Ovary (tissue), 10 donors: ENCODE measurements at regions of chr5 and their contacts with region 1.

Region 1: GRCh38 chr5:59039296-59040023 is 456.6 kb downstream of the RAB3C start:
- DNase-seq: peak; percentile 22 to 66 (median 55)
- H3K4me3 ChIP-seq: peak overlapping the region; percentile 64
- H3K27ac ChIP-seq: no peak overlapping the region
- H3K4me1 ChIP-seq: peaks cover 2% of the 10 kb centered on the region
- H3K27me3 ChIP-seq: no peaks in the 10 kb centered on the region
- CTCF ChIP-seq: no peak
- EP300 ChIP-seq: no peak
- POLR2A ChIP-seq: no peak

Region 2: DNA sequence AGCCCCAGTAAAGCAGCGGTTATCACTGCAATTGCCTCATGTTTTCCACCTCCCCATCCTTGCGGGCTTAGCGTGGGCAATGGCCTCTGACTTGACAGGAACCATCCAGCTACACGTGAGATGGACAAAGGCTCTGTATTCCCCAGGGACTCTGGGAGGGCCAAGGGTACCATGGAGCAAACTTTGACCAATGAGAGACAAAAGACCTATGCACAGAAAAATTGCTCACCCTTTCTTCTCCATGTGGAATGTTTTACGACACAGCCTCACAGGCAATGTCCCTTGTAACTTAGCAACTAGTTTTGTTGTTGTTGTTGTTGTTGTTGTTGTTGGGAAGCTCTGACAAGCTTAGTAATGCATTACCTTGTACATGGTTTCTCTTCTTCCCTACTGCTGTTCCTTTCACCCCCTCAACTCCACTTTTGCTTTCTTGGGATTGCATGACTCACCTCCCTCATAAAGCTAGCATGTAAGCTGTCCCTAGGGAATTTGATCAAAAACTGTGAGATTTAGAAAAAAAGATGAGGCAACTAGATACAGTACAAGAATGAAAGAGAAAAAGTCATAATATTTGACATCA is 94.3 kb after region 1 on chr5:
- intact Hi-C with region 1: loop called in 1 of 4 experiments (anchors 10 kb)
- DNase-seq: no peak
- H3K4me3 ChIP-seq: no peak overlapping the region
- H3K27ac ChIP-seq: no peak overlapping the region
- H3K4me1 ChIP-seq: no peaks in the 10 kb centered on the region
- H3K27me3 ChIP-seq: no peaks in the 10 kb centered on the region
- CTCF ChIP-seq: no peak
- EP300 ChIP-seq: no peak
- POLR2A ChIP-seq: no peak